Gastrocnemius medialis (tissue), 4 donors: ENCODE measurements at regions of chr1 and their contacts with region 1.

Region 1: DNA sequence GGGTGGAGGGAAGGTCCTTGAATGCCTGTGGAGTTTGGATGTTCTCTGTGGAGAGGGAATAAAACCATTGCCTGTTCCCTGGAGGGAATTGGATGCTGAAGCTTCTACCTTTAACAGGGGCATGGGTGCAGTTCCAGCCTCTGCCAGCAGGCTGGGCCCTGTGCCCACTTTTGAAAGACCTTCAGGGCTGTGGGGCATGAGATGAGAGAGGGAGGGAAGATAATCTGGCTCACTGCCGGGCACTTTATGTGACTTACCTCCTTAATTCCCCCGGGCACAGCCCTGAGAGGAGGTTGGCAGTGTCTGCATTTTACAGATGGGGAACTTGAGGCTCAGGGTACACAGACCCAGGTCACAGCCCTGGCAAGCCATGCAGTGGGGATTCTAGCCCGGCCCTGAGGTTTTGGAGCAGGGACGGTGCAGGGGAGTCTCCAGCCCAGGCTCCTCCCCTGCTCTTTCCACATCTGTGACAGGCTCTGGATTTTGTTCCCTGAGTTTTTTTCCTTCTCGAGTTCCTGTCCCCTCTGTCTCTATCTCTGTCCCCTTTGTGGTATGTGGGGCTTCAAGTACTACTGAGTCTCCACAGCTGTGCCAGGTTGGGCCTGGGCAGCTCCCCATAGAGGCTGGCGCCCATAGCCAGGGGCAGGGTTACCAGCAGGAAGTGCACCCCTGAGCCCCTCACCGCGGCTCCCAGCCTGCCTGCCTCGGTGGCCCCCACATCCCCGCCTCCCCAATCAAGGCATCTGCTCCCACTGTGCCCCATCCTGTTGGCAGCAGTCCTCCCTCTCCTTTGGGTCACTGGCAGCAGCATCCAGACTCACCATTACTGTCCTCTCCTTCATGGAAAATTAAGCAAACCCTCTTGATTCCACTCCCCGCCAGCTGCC is 14.0 kb upstream of the THEMIS2 start:
- DNase-seq: peak; percentile 77 to 81
- ATAC-seq: peak; percentile 79 to 87
- H3K4me3 ChIP-seq: no peak overlapping the region
- H3K27ac ChIP-seq: peak overlapping the region in 3 of 4 donors; percentile 8 to 32 (median 31)
- H3K4me1 ChIP-seq: peaks cover 5 to 11% of the 10 kb centered on the region in 2 donors
- H3K27me3 ChIP-seq: no peaks in the 10 kb centered on the region
- CTCF ChIP-seq: peak; percentile 81 to 89 (median 86)
- POLR2A ChIP-seq: no peak

Region 2: GRCh38 chr1:27906759-27907158 is 48.4 kb after region 1 on chr1:
- in situ Hi-C with region 1: no loop called
- intact Hi-C with region 1: loop called (anchors 5 kb)
- DNase-seq: peak; percentile 57 to 73
- ATAC-seq: peak; percentile 88 to 97
- H3K4me3 ChIP-seq: no peak overlapping the region
- H3K27ac ChIP-seq: peak overlapping the region; percentile 60 to 70 (median 67)
- H3K4me1 ChIP-seq: peaks cover 13 to 17% of the 10 kb centered on the region in 2 donors
- H3K27me3 ChIP-seq: no peaks in the 10 kb centered on the region
- CTCF ChIP-seq: no peak
- POLR2A ChIP-seq: no peak

Region 3: GRCh38 chr1:27959400-27960217 is 101.3 kb after region 1 on chr1 and contains the start of gene XKR8:
- in situ Hi-C with region 1: no loop called
- intact Hi-C with region 1: loop called (anchors 5 kb)
- DNase-seq: peak; percentile 41 to 52
- ATAC-seq: peak; percentile 73 to 86
- H3K4me3 ChIP-seq: peak within 1 kb of the TSS; percentile 61 to 86 (median 78)
- H3K27ac ChIP-seq: peak within 1 kb of the TSS; percentile 78 to 87 (median 82)
- H3K4me1 ChIP-seq: peaks cover 9 to 11% of the 10 kb centered on the region in 2 donors
- H3K27me3 ChIP-seq: no peaks in the 10 kb centered on the region
- CTCF ChIP-seq: peak in 4 of 5 experiments; percentile 21 to 47 (median 25)
- POLR2A ChIP-seq: peak; percentile 45 to 52
- total RNA-seq, gene XKR8: 3.8 to 7.4 (median 5.4) TPM

Region 4: GRCh38 chr1:27970401-27970800 is 112.1 kb after region 1 on chr1:
- in situ Hi-C with region 1: loop called in 2 of 4 experiments (anchors 5 to 25 kb)
- intact Hi-C with region 1: no loop called
- DNase-seq: peak; percentile 29 to 62
- ATAC-seq: peak; percentile 67 to 70
- H3K4me3 ChIP-seq: no peak overlapping the region
- H3K27ac ChIP-seq: peak overlapping the region in 3 of 4 donors; percentile 52 to 73 (median 63)
- H3K4me1 ChIP-seq: peaks cover 0 to 30% of the 10 kb centered on the region in 2 donors
- H3K27me3 ChIP-seq: no peaks in the 10 kb centered on the region
- CTCF ChIP-seq: no peak
- POLR2A ChIP-seq: no peak

Region 5: GRCh38 chr1:27979151-27979858 is 121.0 kb after region 1 on chr1:
- in situ Hi-C with region 1: loop called in 3 of 4 experiments (anchors 5 to 25 kb)
- intact Hi-C with region 1: loop called (anchors 1 kb)
- DNase-seq: no peak
- ATAC-seq: peak; percentile 93 to 96
- H3K4me3 ChIP-seq: no peak overlapping the region
- H3K27ac ChIP-seq: peak overlapping the region in 3 of 4 donors; percentile 38 to 66 (median 46)
- H3K4me1 ChIP-seq: peaks cover 3 to 10% of the 10 kb centered on the region in 2 donors
- H3K27me3 ChIP-seq: no peaks in the 10 kb centered on the region
- CTCF ChIP-seq: peak; percentile 48 to 63 (median 61)
- POLR2A ChIP-seq: no peak